Naive thymus-derived CD4-positive, alpha-beta T cell (primary cell): ENCODE measurements at regions of chr3 and their contacts with region 1.

Region 1: DNA sequence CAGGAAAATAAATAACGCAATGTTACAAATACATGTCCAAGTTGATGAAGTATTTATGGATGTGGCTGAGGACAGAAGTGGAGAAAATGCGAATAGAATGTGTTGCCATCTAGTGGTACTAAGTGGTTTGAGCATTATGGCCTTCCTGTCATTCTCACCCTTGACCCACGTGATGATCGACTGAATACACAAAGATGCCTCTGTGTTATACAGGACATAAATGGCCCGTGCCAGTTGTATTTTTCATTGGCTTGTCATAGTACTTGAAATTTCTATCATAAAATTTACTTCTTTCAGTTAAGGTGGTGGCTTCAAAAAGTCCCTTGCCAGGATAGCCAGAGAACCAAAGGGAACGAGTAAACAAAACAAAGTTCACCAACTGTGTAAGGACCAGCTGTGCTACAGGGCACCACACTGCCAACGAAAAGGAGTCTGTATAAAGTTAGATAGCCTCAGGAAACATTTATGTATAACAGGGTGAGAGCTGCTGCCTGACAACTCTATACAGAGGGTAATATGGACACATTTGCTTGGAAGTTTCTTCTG is 103.7 kb downstream of the MYH15 start:
- DNase-seq: peak in 4 of 9 donors; percentile 18 to 57 (median 50)
- ATAC-seq: peak; percentile 82
- H3K4me3 ChIP-seq: no peak overlapping the region
- H3K4me3 Mint-ChIP-seq: no peak overlapping the region
- H3K27ac ChIP-seq: no peak overlapping the region
- H3K27ac Mint-ChIP-seq: peak overlapping the region in 1 of 9 donors; percentile 2
- H3K4me1 ChIP-seq: no peaks in the 10 kb centered on the region
- H3K4me1 Mint-ChIP-seq: peaks cover 0 to 6% (median 2%) of the 10 kb centered on the region in 7 donors
- H3K27me3 ChIP-seq: no peaks in the 10 kb centered on the region
- H3K27me3 Mint-ChIP-seq: peaks cover 0 to 6% (median 0%) of the 10 kb centered on the region in 5 donors

Region 2: GRCh38 chr3:107810171-107811071 is 596.3 kb before region 1 on chr3:
- CTCF ChIA-PET with region 1: no interaction called
- POLR2A ChIA-PET with region 1: no interaction called
- intact Hi-C with region 1: loop called in 1 of 2 experiments (anchors 10 kb)
- DNase-seq: no peak
- ATAC-seq: no peak
- H3K4me3 ChIP-seq: no peak overlapping the region
- H3K4me3 Mint-ChIP-seq: no peak overlapping the region
- H3K27ac ChIP-seq: no peak overlapping the region
- H3K27ac Mint-ChIP-seq: peak overlapping the region in 4 of 9 donors; percentile 13 to 45 (median 34)
- H3K4me1 ChIP-seq: no peaks in the 10 kb centered on the region
- H3K4me1 Mint-ChIP-seq: peaks cover 0 to 21% (median 11%) of the 10 kb centered on the region in 7 donors
- H3K27me3 ChIP-seq: no peaks in the 10 kb centered on the region
- H3K27me3 Mint-ChIP-seq: no peaks in the 10 kb centered on the region

Region 3: GRCh38 chr3:107938143-107938542 is 468.6 kb before region 1 on chr3:
- CTCF ChIA-PET with region 1: interaction called, 5 read pairs
- POLR2A ChIA-PET with region 1: no interaction called
- intact Hi-C with region 1: loop called (anchors 1 to 10 kb)
- DNase-seq: peak in 4 of 9 donors; percentile 6 to 19 (median 8)
- ATAC-seq: no peak
- H3K4me3 ChIP-seq: no peak overlapping the region
- H3K4me3 Mint-ChIP-seq: no peak overlapping the region
- H3K27ac ChIP-seq: no peak overlapping the region
- H3K27ac Mint-ChIP-seq: no peak overlapping the region
- H3K4me1 ChIP-seq: peaks cover 0 to 4% of the 10 kb centered on the region in 2 donors
- H3K4me1 Mint-ChIP-seq: peaks cover 0 to 15% (median 8%) of the 10 kb centered on the region in 7 donors
- H3K27me3 ChIP-seq: no peaks in the 10 kb centered on the region
- H3K27me3 Mint-ChIP-seq: peaks cover 0 to 30% (median 0%) of the 10 kb centered on the region in 5 donors

Region 4: DNA sequence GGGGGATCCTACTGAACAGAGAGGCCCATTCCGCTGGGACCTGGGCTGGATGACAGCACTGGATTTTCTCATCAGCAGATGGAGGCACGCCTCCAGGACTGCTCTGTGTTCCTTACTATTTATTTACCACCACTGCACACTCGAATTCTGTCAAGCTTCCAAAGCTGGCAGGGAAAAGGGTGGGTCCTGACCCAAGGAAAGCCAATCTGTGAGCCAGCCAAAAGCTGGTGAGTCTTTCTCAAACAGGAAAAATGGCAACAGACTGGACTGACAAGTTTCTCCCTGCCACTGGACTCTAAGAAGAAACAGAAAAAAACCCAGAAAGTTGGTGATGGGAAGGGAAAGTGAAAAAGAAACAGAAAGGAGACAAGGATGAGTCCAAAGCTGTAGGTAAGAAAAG is 353.7 kb before region 1 on chr3:
- CTCF ChIA-PET with region 1: no interaction called
- POLR2A ChIA-PET with region 1: no interaction called
- intact Hi-C with region 1: loop called in 1 of 2 experiments (anchors 5 kb)
- DNase-seq: no peak
- ATAC-seq: no peak
- H3K4me3 ChIP-seq: no peak overlapping the region
- H3K4me3 Mint-ChIP-seq: no peak overlapping the region
- H3K27ac ChIP-seq: no peak overlapping the region
- H3K27ac Mint-ChIP-seq: peak overlapping the region in 7 of 9 donors; percentile 10 to 82 (median 77)
- H3K4me1 ChIP-seq: peaks cover 4 to 8% of the 10 kb centered on the region in 2 donors
- H3K4me1 Mint-ChIP-seq: peaks cover 31 to 68% (median 49%) of the 10 kb centered on the region in 7 donors
- H3K27me3 ChIP-seq: no peaks in the 10 kb centered on the region
- H3K27me3 Mint-ChIP-seq: no peaks in the 10 kb centered on the region

Region 5: GRCh38 chr3:108153451-108153981 is 253.2 kb before region 1 on chr3:
- CTCF ChIA-PET with region 1: no interaction called
- POLR2A ChIA-PET with region 1: no interaction called
- intact Hi-C with region 1: loop called (anchors 1 kb)
- DNase-seq: peak in 8 of 9 donors; percentile 36 to 64 (median 45)
- ATAC-seq: peak; percentile 73
- H3K4me3 ChIP-seq: no peak overlapping the region
- H3K4me3 Mint-ChIP-seq: no peak overlapping the region
- H3K27ac ChIP-seq: no peak overlapping the region
- H3K27ac Mint-ChIP-seq: peak overlapping the region in 1 of 9 donors; percentile 25
- H3K4me1 ChIP-seq: peaks cover 0 to 4% of the 10 kb centered on the region in 2 donors
- H3K4me1 Mint-ChIP-seq: peaks cover 0 to 21% (median 13%) of the 10 kb centered on the region in 7 donors
- H3K27me3 ChIP-seq: no peaks in the 10 kb centered on the region
- H3K27me3 Mint-ChIP-seq: no peaks in the 10 kb centered on the region

Region 6: GRCh38 chr3:108940568-108941263 is 534.0 kb after region 1 on chr3:
- CTCF ChIA-PET with region 1: no interaction called
- POLR2A ChIA-PET with region 1: no interaction called
- intact Hi-C with region 1: no loop called
- DNase-seq: no peak
- ATAC-seq: no peak
- H3K4me3 ChIP-seq: no peak overlapping the region
- H3K4me3 Mint-ChIP-seq: no peak overlapping the region
- H3K27ac ChIP-seq: no peak overlapping the region
- H3K27ac Mint-ChIP-seq: no peak overlapping the region
- H3K4me1 ChIP-seq: no peaks in the 10 kb centered on the region
- H3K4me1 Mint-ChIP-seq: no peaks in the 10 kb centered on the region
- H3K27me3 ChIP-seq: no peaks in the 10 kb centered on the region
- H3K27me3 Mint-ChIP-seq: peaks cover 0 to 5% (median 0%) of the 10 kb centered on the region in 5 donors